ENCODE measurements at regions of chr16 and their contacts with region 1.

Region 1: DNA sequence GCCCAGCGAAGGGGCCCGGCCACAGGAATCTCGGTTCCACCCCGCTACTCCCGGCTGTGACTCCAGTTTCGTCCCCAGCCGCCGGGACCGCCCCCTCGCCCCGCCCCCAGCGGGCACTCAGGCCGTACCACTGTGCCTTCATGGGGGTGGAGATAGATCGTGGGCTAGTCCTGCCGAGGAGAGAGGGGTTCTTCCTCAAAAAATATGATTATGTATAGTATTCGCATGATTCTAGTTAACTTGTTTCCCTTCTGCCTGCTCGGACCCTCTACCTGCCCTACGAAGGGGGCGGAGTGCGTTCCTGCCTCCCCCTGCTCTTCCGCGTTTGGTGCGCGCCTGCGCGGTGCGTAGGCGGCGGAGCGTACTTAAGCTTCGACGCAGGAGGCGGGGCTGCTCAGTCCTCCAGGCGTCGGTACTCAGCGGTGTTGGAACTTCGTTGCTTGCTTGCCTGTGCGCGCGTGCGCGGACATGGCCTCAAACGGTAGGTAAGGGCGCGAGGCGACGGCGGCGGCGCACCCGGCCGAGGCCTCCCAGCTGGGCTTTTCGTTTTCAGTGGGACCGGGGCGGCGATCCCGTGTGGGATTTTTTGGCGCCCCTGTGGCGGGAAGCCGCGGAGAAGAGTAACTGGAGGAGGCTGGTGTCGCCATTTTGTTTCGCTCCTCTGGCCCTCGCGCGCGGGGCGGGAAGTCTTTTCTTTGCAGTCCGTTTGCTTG is at the start of gene FUS:
- H3K4me3 ChIP-seq: peak within 1 kb of the TSS; percentile 72
- H3K27ac ChIP-seq: peak within 1 kb of the TSS; percentile 91
- H3K4me1 ChIP-seq: no peaks in the 10 kb centered on the region
- CTCF ChIP-seq: peak; percentile 72; the same call in 1 of the 2 replicates

Region 2: GRCh38 chr16:30967795-30968194 is 212.1 kb before region 1 on chr16:
- CTCF ChIA-PET with region 1: no interaction called
- POLR2A ChIA-PET with region 1: no interaction called
- H3K4me3 ChIP-seq: no peak overlapping the region
- H3K27ac ChIP-seq: no peak overlapping the region
- H3K4me1 ChIP-seq: no peaks in the 10 kb centered on the region
- CTCF ChIP-seq: no peak

Region 3: GRCh38 chr16:31073968-31074813 is 105.7 kb before region 1 on chr16 and contains the starts of genes ZNF646 and ZNF668:
- CTCF ChIA-PET with region 1: no interaction called
- POLR2A ChIA-PET with region 1: interaction called, 17 read pairs
- H3K4me3 ChIP-seq: peak within 1 kb of the TSS; percentile 93
- H3K27ac ChIP-seq: peak within 1 kb of the TSS; percentile 83
- H3K4me1 ChIP-seq: no peaks in the 10 kb centered on the region
- CTCF ChIP-seq: peak; percentile 63

Region 4: DNA sequence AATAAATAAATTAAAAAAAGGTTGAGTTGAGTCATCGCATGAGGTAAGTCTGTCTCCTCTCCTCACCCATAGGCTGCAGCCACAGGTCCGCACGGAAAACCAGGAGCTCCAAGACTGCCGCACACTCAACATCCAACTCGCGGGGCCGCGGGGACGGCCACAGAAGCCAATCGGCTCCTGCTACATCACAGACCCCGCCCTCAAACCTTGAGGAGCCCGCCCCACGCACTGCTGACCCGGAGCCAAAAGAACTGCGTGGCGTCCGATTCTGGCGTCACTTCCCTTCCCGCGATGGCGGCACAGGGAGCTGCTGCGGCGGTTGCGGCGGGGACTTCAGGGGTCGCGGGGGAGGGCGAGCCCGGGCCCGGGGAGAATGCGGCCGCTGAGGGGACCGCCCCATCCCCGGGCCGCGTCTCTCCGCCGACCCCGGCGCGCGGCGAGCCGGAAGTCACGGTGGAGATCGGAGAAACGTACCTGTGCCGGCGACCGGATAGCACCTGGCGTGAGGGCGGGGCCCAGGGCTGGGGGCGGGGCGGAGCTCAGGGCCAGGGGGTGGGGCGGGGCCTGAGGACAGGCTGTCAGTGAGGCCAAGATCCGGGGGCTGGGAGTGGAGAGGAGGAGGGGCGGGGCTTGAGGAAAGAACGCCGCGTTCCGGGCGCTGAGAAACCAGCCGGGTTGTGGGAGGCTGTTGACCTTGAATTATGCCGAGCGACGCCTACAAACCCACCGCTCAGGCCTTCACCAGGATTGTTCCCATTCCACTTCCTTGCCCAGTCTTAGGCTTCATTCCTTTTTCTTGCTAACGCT is 62.3 kb before region 1 on chr16 and contains the start of gene KAT8:
- CTCF ChIA-PET with region 1: no interaction called
- POLR2A ChIA-PET with region 1: interaction called, 43 read pairs
- H3K4me3 ChIP-seq: peak within 1 kb of the TSS; percentile 75
- H3K27ac ChIP-seq: peak within 1 kb of the TSS; percentile 57
- H3K4me1 ChIP-seq: peaks cover 4% of the 10 kb centered on the region; the same call in 1 of the 2 replicates
- CTCF ChIP-seq: no peak

Region 5: GRCh38 chr16:31157136-31157535 is 22.8 kb before region 1 on chr16:
- CTCF ChIA-PET with region 1: no interaction called
- POLR2A ChIA-PET with region 1: interaction called, 13 read pairs
- H3K4me3 ChIP-seq: no peak overlapping the region
- H3K27ac ChIP-seq: no peak overlapping the region
- H3K4me1 ChIP-seq: no peaks in the 10 kb centered on the region
- CTCF ChIP-seq: no peak

Region 6: GRCh38 chr16:31191697-31192428 is 12.0 kb after region 1 on chr16:
- CTCF ChIA-PET with region 1: interaction called, 3 read pairs
- POLR2A ChIA-PET with region 1: interaction called, 25 read pairs
- H3K4me3 ChIP-seq: no peak overlapping the region
- H3K27ac ChIP-seq: no peak overlapping the region
- H3K4me1 ChIP-seq: no peaks in the 10 kb centered on the region
- CTCF ChIP-seq: no peak

Region 7: DNA sequence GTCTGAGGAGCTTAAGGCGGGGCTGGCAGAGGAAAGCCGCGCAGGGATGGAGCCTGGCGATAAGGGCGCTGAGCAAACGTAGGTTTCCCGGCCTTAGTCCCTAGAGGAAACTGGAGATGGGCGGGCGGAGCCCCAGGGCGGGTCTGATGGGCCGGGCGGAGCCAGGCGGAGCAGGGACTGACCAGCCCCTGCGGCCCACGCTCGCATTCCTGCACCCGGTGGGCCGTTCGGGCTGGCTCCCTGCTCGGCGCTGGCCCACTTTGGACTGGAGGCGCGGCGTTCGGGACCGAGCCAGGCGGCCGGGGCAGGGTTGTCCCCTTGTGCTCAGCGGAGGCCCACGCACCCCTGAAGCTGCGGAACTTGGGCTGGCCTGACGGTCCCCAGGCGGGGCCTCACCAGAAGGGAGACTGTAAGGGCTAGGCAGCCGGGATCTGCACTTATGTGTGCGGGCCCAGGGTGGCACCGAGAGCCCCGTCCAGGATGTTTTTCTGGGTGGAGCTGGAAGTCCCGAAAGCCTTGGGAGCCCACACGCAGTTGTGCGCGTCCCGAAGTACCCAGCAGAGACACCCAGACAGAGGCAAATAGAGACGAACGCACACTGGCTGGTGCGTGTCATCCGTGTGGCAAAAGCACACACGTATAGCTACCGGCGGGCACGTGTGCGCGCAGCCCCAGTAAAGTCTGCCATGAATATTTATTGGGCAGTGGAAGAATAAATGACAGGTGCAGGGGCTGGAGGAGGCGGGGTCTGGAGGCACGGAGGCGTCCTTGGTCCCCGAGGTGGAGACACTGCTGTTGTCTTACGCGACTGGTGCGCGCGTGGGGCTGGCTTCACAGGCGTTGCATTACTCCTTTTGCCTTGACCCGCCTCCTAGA is 35.6 kb after region 1 on chr16:
- CTCF ChIA-PET with region 1: no interaction called
- POLR2A ChIA-PET with region 1: interaction called, 21 read pairs
- H3K4me3 ChIP-seq: peak overlapping the region; percentile 45
- H3K27ac ChIP-seq: no peak overlapping the region; the same call in 1 of the 2 replicates
- H3K4me1 ChIP-seq: no peaks in the 10 kb centered on the region
- CTCF ChIP-seq: 0 out of 2 replicates have a peak, but pooled peaks have one; percentile 10